ENCODE measurements at regions of chr2 and their contacts with region 1.

Region 1: GRCh38 chr2:172674034-172674967 is 61.3 kb upstream of the RAPGEF4 start:
- DNase-seq: peak; percentile 23
- H3K4me3 ChIP-seq: no peak overlapping the region
- H3K27ac ChIP-seq: no peak overlapping the region
- H3K4me1 ChIP-seq: no peaks in the 10 kb centered on the region
- H3K27me3 ChIP-seq: no peaks in the 10 kb centered on the region
- CTCF ChIP-seq: peak; percentile 56

Region 2: GRCh38 chr2:172588931-172589330 is 85.4 kb before region 1 on chr2:
- CTCF ChIA-PET with region 1: no interaction called
- POLR2A ChIA-PET with region 1: interaction called, 24 read pairs
- intact Hi-C with region 1: no loop called
- DNase-seq: no peak
- H3K4me3 ChIP-seq: no peak overlapping the region
- H3K27ac ChIP-seq: no peak overlapping the region
- H3K4me1 ChIP-seq: no peaks in the 10 kb centered on the region
- H3K27me3 ChIP-seq: no peaks in the 10 kb centered on the region
- CTCF ChIP-seq: no peak